ENCODE measurements at regions of chr11 and their contacts with region 1.

Region 1: DNA sequence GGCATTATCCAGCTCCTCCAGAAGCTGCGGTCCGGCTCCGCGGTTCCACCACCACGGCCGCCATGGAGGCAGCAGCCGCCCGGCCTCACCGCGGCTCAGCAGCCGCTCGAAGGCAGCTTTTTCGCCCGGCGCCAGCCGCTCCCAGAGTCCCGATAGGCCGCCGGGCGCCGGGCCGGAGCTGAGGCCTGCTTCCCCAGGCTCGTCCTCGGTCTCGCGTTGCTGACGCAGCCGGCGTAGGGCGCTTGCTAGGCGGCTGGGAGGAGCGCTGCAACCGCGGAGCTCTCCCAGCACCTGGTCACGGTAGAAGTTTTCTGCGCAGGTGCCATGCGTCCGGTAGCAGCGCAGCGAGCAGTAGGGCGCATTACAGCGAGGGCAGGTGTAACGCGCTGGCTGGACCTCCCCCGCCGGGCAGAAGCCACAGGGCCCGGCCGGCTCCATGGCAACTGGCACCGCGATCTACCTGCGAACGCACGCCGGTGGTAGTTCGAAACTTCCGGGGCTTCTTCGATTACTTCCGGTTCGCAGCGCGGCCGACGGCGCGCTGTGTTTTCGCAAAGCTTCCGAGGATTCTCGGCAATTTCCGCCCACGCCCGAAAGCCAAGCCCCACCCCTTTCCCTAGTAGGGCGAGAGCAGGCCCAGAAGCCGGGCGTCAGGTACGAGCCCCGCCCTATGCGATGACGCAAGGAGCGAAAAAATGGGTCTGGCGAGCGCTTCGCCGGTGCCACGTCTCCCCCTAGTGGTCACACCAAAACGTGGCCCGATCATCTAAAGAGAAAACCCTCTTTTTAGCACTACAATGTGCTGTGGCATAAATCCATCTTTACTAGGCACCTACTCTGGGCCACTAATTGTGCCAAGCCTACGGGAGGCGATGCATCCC is at the start of gene ZNHIT2:
- DNase-seq: peak; percentile 94
- H3K4me3 ChIP-seq: peak within 1 kb of the TSS; percentile 79
- H3K27me3 ChIP-seq: no peaks in the 10 kb centered on the region
- CTCF ChIP-seq: peak; percentile 90
- polyA plus RNA-seq, gene ZNHIT2: 3.6 and 4.6 TPM in 2 replicates

Region 2: DNA sequence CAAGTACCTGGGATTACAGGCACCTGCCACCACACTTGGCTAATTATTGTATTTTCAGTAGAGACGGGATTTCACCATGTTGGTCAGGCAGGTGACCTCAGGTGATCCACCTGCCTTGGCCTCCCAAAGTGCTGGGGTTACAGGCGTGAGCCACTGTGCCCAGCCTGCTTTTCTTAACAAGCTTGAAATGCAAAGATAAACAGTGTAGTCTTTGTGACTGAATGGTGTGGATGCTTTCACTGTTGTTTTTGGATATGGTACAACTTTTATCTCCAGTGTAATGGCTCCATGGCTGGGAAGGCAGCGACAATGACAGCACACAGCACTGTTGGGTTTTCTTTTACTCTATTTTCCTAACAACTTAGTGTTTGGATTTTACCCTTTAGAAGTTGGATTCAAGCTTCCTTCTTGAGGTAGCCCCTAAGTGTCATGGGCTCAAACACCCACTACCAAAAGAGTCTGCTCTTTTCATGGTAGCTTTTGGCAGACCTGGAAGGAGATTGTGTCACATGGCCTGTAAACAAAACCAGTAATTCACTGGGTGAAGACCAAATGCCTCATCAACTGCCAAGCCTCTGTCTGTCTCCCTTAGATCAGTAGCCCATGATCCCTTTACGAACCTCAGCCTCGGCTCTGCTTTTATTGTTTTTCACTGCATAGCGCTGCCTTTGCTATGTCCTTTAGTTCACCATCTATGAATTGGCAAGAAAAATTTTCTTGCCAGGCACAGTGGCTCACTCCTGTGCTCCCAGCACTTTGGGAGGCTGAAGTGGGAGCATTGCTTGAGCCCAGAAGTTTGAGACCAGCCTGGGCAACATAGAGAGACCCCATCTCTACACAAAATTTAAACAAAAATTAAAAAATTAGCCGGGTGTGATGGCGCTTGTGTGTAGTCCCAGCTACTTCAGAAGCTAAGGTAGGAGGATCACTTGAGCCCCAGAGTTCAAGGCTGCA is 15.0 kb before region 1 on chr11:
- CTCF ChIA-PET with region 1: interaction called, 152 read pairs
- POLR2A ChIA-PET with region 1: interaction called, 5 read pairs
- DNase-seq: no peak
- H3K4me3 ChIP-seq: no peak overlapping the region
- H3K27me3 ChIP-seq: no peaks in the 10 kb centered on the region
- CTCF ChIP-seq: no peak

Region 3: DNA sequence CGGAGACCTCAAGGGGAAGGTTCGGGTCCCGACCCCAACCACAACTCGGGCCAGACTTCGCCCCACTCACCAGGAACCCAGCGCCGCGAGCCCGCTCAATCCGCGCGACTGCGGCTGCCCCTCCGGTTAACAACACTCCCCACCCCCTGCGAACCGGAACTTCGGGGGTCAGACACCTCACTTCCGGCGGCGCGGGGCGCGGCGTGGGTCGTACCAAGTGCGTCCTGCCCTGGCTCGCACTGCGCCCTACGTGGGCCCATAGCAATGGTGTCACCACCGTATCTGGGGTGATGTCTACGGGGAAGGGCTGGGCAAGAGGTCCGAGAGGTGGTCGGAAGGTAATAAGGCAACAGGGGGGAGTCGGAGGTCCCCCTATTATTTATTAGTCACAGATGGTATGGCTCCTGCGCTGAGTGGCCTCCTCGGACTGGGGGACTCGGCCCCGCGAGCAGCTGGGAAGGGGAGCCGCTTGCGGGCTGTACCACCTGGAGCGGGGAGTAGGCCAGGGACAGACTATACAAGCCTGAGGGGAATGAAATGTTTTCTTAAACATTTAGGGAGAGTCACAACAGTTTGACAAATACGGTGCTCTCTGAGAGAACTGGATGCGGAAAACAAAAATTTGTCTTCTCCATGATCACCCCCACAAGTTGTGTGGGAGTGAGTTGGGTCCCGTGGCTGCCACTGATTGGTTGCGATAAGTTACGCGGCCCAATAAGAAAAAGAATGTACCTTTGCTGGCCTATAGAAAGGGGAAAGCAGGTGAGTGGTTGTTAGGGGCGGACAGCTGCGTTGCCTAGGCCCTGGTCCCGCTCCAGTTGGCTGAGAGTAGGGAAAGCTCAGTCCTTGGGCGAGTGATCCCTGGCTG is 17.2 kb after region 1 on chr11 and contains the start of gene SYVN1:
- CTCF ChIA-PET with region 1: interaction called, 11 read pairs
- POLR2A ChIA-PET with region 1: interaction called, 5 read pairs
- DNase-seq: peak; percentile 87
- H3K4me3 ChIP-seq: peak within 1 kb of the TSS; percentile 84
- H3K27me3 ChIP-seq: no peaks in the 10 kb centered on the region
- CTCF ChIP-seq: no peak
- polyA plus RNA-seq, gene SYVN1: 13.3 and 33.4 TPM in 2 replicates

Region 4: GRCh38 chr11:65497141-65498041 is 379.9 kb after region 1 on chr11:
- CTCF ChIA-PET with region 1: no interaction called
- POLR2A ChIA-PET with region 1: no interaction called
- DNase-seq: peak; percentile 89
- H3K4me3 ChIP-seq: peak overlapping the region; percentile 63
- H3K27me3 ChIP-seq: no peaks in the 10 kb centered on the region
- CTCF ChIP-seq: no peak; the same call in 1 of the 2 replicates